Posterior cingulate gyrus (tissue), 11 donors: ENCODE measurements at regions of chr3 and their contacts with region 1.

Region 1: GRCh38 chr3:56997675-56998074 is 62.8 kb upstream of the SPATA12 start:
- DNase-seq: no peak

Region 2: DNA sequence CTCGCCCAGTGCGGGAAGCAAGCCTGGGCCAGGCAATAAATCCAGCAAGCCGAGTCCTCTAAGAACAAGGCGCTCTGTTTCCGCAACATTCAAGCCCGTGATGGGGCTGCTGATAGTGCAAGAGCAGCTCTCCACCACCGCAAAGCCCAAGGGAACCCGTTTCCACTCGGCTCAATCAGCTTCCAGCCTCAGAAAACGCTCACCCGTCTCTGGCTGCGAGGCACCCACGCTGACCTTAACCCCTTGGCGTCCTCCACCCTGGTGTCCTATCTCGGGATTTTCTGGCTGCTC is 80.6 kb after region 1 on chr3:
- intact Hi-C with region 1: loop called (anchors 5 kb)
- DNase-seq: peak in 5 of 10 donors; percentile 11 to 86 (median 25)

Region 3: GRCh38 chr3:57100046-57100695 is 102.5 kb after region 1 on chr3:
- intact Hi-C with region 1: loop called (anchors 5 kb)
- DNase-seq: peak in 8 of 10 donors; percentile 43 to 91 (median 76)

Region 4: GRCh38 chr3:57158813-57159738 is 161.4 kb after region 1 on chr3:
- intact Hi-C with region 1: loop called (anchors 10 kb)
- DNase-seq: no peak

Region 5: DNA sequence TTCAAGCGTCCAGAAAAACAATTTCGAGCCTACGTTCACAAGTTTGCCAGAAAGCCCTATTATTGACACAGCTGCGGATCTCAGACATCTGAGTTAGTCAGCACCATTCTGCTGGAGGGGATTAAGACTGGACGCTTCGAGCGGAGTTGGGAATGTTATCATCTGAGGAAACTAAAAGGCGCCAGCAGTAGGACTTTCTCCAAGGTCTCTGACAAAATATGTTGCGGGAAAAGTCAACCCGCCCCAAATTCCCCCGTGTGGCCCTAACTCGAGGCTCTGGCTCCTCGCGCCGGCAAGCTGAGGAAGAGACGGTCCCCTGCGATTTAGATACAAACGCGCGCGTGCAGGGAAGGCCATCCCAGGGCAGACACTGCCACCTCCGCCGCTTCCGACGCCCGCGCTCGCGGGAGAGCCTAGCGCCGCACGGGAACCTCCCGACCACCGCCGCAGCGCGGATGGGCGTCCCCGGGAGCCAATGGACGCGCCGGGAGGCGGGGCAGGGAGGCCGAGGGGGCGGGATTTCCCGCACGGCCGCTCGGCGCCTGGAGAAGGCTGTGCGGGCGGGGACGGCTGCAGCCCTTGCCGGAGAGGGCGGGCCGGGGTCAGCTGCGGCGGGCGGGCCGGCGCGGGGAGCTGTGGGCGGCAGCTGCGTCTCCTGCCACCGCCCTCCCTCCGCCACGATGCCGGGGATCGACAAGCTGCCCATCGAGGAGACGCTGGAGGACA is 229.7 kb after region 1 on chr3 and contains the start of gene APPL1:
- intact Hi-C with region 1: loop called (anchors 10 kb)
- DNase-seq: peak; percentile 88 to 99 (median 92)